Activated CD4-positive, alpha-beta T cell treated with anti-CD3 and anti-CD28 coated beads for 36 hours (primary cell): ENCODE measurements at regions of chr12 and their contacts with region 1.

Region 1: DNA sequence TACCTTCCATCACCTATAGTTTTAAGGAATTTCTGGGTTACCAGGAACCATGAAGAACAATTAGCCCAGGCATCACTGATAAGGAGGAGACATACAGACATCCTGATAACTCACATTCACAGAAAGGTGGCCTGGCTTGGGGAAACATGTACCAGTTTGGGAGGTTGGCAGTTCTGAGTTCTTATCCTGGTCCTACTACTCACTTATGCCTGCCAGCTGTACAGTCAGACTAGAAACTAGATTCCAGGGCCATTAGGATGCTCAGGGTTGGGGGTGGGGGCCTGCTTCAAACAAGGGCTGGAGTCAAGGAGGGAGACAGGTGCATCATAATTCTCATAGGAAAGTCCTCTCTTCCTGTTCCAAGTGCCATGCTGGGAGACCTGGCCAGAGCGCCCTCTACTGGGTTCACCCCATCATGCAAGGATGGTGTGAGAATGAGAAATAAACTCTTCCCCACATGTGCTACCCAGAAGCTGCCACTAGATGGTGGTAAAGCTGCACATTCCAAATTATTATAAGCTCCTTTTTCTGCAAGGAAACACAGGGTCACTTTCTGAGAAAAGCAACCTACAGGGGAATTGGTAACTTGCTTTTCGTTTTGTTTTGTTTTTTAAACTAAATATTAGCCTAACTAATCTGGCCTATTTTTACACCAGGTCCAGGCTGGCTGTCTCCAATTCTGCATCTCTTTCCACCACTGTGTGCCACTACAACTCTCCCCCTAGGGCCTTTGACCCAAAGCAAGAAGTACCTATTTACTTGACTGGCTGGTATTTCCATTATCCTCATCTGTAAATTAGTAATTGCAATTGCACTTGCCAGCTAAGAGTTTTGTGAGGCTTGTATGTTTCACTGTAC is 14.5 kb downstream of the OAS2 start:
- DNase-seq: peak; percentile 82
- ATAC-seq: peak; percentile 63
- H3K4me3 Mint-ChIP-seq: no peak overlapping the region
- H3K27ac Mint-ChIP-seq: no peak overlapping the region
- H3K4me1 Mint-ChIP-seq: peaks cover 23% of the 10 kb centered on the region
- H3K27me3 Mint-ChIP-seq: no peaks in the 10 kb centered on the region

Region 2: DNA sequence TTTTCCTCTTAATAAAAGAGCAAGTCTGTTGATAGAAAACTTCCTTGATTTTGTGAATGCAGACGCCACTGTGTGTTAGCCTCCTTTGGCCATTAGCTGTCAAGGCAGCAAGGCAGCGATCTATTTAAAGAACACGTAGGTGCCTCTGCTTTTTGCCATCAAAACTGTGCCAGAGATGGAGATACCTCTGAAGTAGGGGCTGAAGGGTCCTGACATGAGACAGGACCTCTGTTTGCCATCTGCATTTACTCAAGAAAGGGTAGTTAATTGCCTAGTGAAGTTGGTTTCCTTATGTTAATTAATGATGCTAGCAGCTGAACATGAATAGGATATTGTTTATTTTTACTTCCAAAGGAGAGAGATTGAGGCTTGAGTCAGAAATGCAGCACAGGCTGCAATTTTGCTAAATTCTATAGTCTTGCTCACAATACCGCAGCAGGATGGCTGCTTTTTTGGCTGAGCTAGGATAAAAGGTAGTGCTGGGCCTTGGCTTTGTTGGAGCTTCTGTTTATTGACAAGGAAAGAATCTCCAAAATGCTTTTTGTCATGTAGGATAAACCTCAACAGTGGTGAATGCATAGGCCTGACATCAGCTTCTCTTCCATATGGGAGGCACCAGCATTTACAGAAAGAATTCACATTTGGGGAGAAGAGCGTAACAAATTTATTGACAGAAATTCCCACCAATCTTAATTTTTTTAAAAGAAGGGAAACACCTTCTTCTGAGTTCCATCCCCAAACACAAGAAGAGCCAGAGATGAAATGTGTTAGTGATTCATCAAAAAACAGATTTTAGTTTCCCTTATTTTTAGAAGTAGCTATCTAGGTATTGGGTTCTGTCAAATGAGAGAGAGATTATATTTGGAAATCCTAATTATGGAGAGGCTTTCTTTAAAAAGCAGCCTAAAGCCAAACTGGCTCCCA is 215.1 kb before region 1 on chr12:
- CTCF ChIA-PET with region 1: no interaction called
- POLR2A ChIA-PET with region 1: no interaction called
- intact Hi-C with region 1: no loop called
- DNase-seq: no peak
- ATAC-seq: no peak
- H3K4me3 Mint-ChIP-seq: no peak overlapping the region
- H3K27ac Mint-ChIP-seq: no peak overlapping the region
- H3K4me1 Mint-ChIP-seq: no peaks in the 10 kb centered on the region
- H3K27me3 Mint-ChIP-seq: peaks cover 18% of the 10 kb centered on the region

Region 3: DNA sequence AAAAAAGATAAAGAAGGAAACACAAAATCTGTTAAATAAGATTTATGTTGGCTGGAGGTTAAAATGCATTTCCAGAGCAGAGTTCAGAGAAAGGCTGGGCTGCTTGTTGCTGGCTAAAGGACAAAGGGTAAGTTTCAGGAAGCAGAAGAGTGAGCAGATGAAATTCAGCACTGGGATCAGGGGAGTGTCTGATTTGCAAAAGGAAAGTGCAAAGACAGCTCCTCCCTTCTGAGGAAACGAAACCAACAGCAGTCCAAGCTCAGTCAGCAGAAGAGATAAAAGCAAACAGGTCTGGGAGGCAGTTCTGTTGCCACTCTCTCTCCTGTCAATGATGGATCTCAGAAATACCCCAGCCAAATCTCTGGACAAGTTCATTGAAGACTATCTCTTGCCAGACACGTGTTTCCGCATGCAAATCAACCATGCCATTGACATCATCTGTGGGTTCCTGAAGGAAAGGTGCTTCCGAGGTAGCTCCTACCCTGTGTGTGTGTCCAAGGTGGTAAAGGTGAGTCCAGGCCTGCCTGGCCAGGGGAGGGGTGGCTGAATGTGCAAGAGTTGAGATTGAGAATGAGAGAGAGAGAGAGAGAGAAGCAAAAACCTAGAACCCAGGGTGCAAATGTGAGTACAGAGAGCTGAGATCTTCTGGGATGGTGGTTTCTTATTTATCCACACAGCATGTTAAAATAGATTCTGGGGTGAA is 85.9 kb before region 1 on chr12 and contains the start of gene OAS1:
- CTCF ChIA-PET with region 1: interaction called, 18 read pairs
- POLR2A ChIA-PET with region 1: interaction called, 4 read pairs
- intact Hi-C with region 1: loop called in 1 of 2 experiments (anchors 5 kb)
- DNase-seq: peak; percentile 55
- ATAC-seq: peak; percentile 85
- H3K4me3 Mint-ChIP-seq: peak within 1 kb of the TSS; percentile 85
- H3K27ac Mint-ChIP-seq: peak within 1 kb of the TSS; percentile 95
- H3K4me1 Mint-ChIP-seq: peaks cover 56% of the 10 kb centered on the region
- H3K27me3 Mint-ChIP-seq: no peaks in the 10 kb centered on the region
- total RNA-seq, gene OAS1: 50.5 to 52.8 TPM

Region 4: GRCh38 chr12:113005754-113006153 is 13.0 kb after region 1 on chr12:
- CTCF ChIA-PET with region 1: interaction called, 44 read pairs
- POLR2A ChIA-PET with region 1: no interaction called
- intact Hi-C with region 1: no loop called
- DNase-seq: no peak
- ATAC-seq: no peak
- H3K4me3 Mint-ChIP-seq: no peak overlapping the region
- H3K27ac Mint-ChIP-seq: no peak overlapping the region
- H3K4me1 Mint-ChIP-seq: no peaks in the 10 kb centered on the region
- H3K27me3 Mint-ChIP-seq: no peaks in the 10 kb centered on the region

Region 5: DNA sequence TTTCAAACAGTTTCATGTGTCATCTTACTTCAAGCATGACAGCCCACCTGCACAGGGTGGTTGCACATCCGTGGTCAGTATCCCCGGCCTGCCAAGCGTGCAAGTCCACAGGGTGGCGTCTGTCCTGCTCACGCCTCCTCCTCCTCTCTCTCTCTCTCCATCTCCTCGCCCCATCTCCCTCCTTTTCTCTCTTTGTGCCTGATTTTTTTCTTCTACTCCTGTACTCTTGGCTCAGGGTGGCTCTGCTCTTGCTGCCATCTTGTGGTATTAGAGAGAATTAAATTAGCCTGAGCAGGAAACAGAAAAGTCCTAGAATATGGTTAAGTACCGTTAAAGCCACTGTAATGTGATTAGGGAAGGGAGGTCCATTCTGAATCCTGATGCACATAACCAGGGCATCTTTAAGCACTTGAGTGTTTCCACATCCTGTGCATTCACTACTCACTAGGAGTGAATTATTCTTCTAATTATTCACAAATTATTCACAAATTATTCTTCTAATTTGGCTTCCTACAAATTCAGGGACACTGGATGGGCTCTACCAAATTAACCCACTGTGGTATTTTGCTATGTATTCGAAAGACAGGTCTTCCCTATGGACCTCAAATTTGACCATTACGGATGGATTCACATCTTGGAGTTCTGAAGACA is 38.2 kb after region 1 on chr12:
- CTCF ChIA-PET with region 1: interaction called, 14 read pairs
- POLR2A ChIA-PET with region 1: no interaction called
- intact Hi-C with region 1: loop called in 1 of 2 experiments (anchors 1 kb)
- DNase-seq: no peak
- ATAC-seq: no peak
- H3K4me3 Mint-ChIP-seq: no peak overlapping the region
- H3K27ac Mint-ChIP-seq: no peak overlapping the region
- H3K4me1 Mint-ChIP-seq: no peaks in the 10 kb centered on the region
- H3K27me3 Mint-ChIP-seq: peaks cover 3% of the 10 kb centered on the region

Region 6: DNA sequence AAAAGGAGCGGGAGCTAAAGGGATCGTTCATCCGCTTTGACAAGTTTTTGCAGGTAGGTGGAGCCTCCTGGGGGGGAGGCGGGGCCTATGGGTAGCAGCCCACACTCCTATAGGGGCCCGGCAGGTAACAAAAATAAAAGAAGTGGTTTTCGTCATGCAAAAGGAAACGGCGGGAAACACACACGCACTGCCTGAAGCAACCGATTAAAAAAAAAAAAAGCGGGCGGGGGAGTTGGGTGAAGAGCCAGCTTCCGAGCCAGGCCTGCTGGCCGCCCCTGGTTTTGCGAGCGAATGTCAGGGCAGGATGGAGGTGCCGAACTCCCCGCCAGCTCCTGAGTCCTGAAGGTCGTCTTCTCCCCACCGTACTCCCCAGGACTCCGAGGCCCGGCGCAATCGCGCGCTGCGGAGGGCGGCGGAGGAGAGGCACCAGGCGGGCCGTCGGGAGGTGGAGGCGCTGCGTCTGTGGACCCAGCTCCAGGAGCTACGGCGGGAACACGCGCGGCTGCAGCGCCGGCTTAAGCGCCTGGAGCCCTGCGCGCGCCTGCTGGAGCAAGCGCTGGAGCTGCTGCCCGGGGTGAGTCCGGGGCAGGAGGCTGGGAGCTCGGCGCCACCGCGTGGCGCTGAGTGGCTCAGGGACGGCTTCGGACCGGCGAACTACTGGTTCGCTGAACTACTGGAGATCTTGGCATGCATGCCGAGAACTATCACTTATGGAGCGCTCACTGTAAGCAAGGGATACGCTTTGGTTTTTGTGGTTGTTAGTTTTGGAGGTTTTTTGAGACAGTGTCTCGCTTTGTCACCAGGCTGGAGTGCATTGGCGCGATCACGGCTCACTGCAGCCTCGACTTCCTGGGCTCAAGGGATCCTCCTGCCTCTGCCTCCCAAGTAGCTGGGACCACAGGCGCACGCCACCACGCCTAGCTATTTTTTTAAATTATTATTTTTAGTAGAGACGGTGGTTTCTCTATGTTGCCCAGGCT is 160.4 kb after region 1 on chr12:
- CTCF ChIA-PET with region 1: interaction called, 23 read pairs
- POLR2A ChIA-PET with region 1: no interaction called
- intact Hi-C with region 1: no loop called
- DNase-seq: peak; percentile 82
- ATAC-seq: peak; percentile 78
- H3K4me3 Mint-ChIP-seq: peak overlapping the region; percentile 69
- H3K27ac Mint-ChIP-seq: peak overlapping the region; percentile 47
- H3K4me1 Mint-ChIP-seq: peaks cover 17% of the 10 kb centered on the region
- H3K27me3 Mint-ChIP-seq: peaks cover 11% of the 10 kb centered on the region